Naive thymus-derived CD8-positive, alpha-beta T cell (primary cell): ENCODE measurements at regions of chr2 and their contacts with region 1.

Region 1: GRCh38 chr2:178450774-178451525 is at the starts of genes PJVK and PRKRA:
- DNase-seq: peak; percentile 92 to 97 (median 95)
- ATAC-seq: peak; percentile 79 to 82
- H3K4me3 Mint-ChIP-seq: peak within 1 kb of the TSS; percentile 86 to 94 (median 92)
- H3K27ac Mint-ChIP-seq: peak within 1 kb of the TSS; percentile 84 to 98 (median 94)
- H3K4me1 Mint-ChIP-seq: peaks cover 13 to 36% (median 33%) of the 10 kb centered on the region in 4 donors
- H3K27me3 Mint-ChIP-seq: no peaks in the 10 kb centered on the region
- polyA plus RNA-seq, gene PJVK: 0.38 to 1.6 (median 0.44) TPM
- polyA plus RNA-seq, gene PRKRA: 57.4 to 66.5 (median 61.6) TPM

Region 2: GRCh38 chr2:178414266-178415247 is 36.4 kb before region 1 on chr2:
- POLR2A ChIA-PET with region 1: interaction called, 27 read pairs
- DNase-seq: peak; percentile 43 to 85 (median 70)
- ATAC-seq: peak; percentile 56 to 59
- H3K4me3 Mint-ChIP-seq: peak overlapping the region; percentile 88 to 99 (median 94)
- H3K27ac Mint-ChIP-seq: peak overlapping the region; percentile 94 to 100 (median 98)
- H3K4me1 Mint-ChIP-seq: peaks cover 19 to 30% (median 29%) of the 10 kb centered on the region in 4 donors
- H3K27me3 Mint-ChIP-seq: no peaks in the 10 kb centered on the region

Region 3: DNA sequence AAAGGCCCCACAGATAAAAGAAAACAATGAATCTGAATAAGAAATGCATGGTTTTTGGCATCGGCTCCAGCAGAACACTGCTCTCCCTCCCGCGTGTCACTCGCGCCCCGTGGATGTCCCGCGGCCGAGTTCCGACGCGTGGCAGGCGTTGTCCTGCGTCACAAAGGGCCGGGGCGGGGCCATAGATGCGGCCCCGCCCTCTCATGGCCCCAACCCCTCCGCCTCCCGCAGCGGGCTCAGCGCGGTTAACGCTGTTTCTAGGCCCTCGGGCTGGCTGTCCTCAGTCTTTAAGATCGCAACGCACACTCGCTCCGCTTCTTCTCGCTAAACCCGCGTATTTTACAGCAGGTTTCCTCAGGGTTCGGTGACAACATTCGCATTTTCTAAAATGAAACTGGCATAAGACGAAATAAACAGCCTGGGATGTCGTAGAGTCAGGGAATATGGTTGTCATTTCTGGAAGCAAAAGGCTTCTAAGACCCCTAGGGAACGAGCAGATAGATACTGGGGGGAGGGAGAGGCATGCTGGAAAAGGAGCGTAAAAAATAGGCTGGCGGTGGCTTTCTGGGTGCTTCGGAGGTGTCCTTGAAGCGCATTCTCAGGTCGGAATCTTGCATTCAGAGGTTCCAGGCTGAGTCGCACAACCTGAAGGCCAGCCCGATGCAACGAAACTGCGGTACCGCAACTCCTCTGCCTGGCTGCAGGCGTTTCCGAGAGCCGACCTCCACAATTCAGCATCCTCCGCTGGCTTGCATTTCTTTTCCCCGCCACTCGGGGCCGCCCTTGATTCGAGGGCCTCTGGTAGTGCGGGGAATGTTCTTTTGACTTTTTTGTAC is 27.7 kb after region 1 on chr2 and contains the start of gene FKBP7:
- POLR2A ChIA-PET with region 1: interaction called, 20 read pairs
- DNase-seq: peak; percentile 78 to 92 (median 84)
- ATAC-seq: peak; percentile 74 to 77
- H3K4me3 Mint-ChIP-seq: peak within 1 kb of the TSS; percentile 92 to 99 (median 98)
- H3K27ac Mint-ChIP-seq: peak within 1 kb of the TSS; percentile 96 to 99 (median 98)
- H3K4me1 Mint-ChIP-seq: peaks cover 20 to 48% (median 42%) of the 10 kb centered on the region in 4 donors
- H3K27me3 Mint-ChIP-seq: no peaks in the 10 kb centered on the region
- polyA plus RNA-seq, gene FKBP7: 2.9 to 7.0 (median 3.9) TPM

Region 4: GRCh38 chr2:178522950-178523595 is 72.1 kb after region 1 on chr2:
- POLR2A ChIA-PET with region 1: interaction called, 18 read pairs
- DNase-seq: peak; percentile 61 to 91 (median 80)
- ATAC-seq: peak; percentile 98
- H3K4me3 Mint-ChIP-seq: peak overlapping the region; percentile 90 to 97 (median 93)
- H3K27ac Mint-ChIP-seq: peak overlapping the region; percentile 70 to 96 (median 93)
- H3K4me1 Mint-ChIP-seq: peaks cover 11 to 40% (median 36%) of the 10 kb centered on the region in 4 donors
- H3K27me3 Mint-ChIP-seq: no peaks in the 10 kb centered on the region